Left colon (tissue), 2 donors: ENCODE measurements at regions of chr10 and their contacts with region 1.

Region 1: DNA sequence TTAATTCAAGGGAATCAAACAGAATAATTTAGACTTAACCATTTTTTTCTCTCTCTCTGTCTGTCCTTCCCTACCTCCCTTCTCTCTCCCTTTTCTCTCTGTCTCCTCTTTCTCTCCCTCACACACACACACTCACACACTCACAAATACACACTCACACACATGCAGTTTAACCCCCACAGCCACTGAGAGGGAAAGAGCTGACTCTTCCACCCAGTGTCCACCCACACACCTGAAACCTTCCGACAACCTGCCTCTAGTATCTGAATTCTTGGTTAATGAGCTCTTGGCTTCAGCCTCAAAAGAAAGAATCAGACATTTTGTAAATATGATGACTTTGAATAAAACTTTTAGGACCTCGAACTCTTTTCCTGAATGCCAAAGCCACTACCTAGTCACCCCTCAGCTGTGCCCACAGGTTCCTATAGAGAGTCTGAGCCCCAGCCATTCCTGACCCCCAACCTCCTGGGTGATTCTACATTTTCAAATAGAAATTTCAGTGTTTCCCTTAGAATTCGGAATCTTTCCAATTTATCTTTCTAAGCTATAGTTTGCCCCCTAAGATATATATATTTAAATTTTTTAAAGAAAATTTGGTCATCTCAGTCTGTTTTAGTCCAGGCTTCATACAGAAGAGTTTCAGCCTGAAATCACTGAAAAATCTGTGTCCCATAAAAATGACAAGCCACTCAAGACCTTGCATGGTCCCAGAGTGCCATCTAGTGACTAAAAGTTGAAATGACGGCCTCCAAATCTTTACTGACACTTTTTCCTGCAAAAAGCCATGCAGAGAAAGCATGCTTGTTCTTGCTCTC is 202.8 kb downstream of the IPMK start:
- DNase-seq: peak in 1 of 2 donors; percentile 9
- ATAC-seq: peak; percentile 70

Region 2: GRCh38 chr10:57338823-57339558 is 725.9 kb before region 1 on chr10:
- intact Hi-C with region 1: loop called in 1 of 2 experiments (anchors 10 kb)
- DNase-seq: no peak
- ATAC-seq: no peak